AG04450 (cell line): ENCODE measurements at regions of chr1 and their contacts with region 1.

Region 1: DNA sequence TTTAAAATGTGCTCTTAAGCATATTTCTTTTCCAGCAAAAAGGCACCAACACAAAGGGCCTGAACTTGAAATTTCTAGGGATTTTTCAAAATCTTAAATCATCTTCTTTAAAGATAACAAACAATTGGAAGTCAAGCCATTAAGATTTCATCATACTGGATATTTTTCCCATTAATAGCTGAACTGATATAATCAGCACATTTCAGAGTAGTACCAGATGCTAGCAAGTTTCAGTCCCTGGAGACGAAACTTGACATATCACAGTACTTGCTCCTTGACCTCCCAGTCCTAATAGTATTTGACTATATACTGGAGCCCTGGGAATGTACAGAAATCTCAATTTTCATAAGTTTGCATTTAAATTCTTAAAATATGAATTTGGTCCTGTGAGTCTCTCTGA is 10.2 kb upstream of the CDC7 start:
- DNase-seq: no peak
- H3K4me3 ChIP-seq: no peak overlapping the region
- H3K27ac ChIP-seq: no peak overlapping the region
- H3K27me3 ChIP-seq: peaks cover 8% of the 10 kb centered on the region
- CTCF ChIP-seq: no peak

Region 2: GRCh38 chr1:91261655-91262054 is 228.8 kb before region 1 on chr1:
- CTCF ChIA-PET with region 1: interaction called, 10 read pairs
- POLR2A ChIA-PET with region 1: no interaction called
- DNase-seq: no peak
- H3K4me3 ChIP-seq: no peak overlapping the region
- H3K27ac ChIP-seq: no peak overlapping the region
- H3K27me3 ChIP-seq: no peaks in the 10 kb centered on the region
- CTCF ChIP-seq: no peak

Region 3: DNA sequence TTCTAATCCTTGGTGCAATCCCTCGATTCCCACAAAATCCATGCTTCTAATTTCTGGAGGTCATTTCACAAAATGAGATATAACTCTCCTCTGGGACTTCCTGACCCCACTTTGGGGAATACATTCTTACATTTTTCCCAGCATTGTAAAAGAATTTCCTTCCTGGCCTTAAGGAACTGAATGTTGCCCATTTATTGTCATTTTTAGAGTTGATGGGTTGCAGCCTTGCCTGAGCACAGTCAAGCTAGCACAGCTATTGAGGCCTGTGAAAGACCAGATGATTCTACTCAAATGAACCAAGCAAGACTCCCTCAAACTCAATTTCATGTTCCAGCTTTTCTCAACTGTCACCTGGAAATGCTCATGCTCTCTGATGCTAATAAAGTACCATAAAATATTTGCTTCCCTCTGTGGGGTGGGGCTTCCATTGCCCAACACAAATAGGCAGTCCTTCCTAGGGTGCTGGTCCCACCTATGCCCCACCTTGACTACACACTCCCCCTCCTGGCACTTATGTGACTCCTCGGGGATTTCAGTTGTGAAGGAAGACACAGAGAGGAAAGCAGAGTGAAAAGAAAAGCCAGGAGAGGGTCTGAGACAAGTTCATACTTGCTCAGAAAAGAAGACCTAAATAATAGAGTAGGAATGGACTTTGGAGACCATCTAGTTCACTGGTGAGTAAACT is 13.8 kb before region 1 on chr1:
- CTCF ChIA-PET with region 1: no interaction called
- POLR2A ChIA-PET with region 1: no interaction called
- DNase-seq: no peak
- H3K4me3 ChIP-seq: no peak overlapping the region
- H3K27ac ChIP-seq: no peak overlapping the region
- H3K27me3 ChIP-seq: peaks cover 11% of the 10 kb centered on the region
- CTCF ChIP-seq: no peak